Mammary epithelial cell (primary cell): ENCODE measurements at regions of chr1 and their contacts with region 1.

Region 1: GRCh38 chr1:89364954-89365567 is 1.2 kb downstream of the GBP6 start:
- DNase-seq: peak; percentile 32
- H3K4me3 ChIP-seq: peak overlapping the region; percentile 2 to 31 (median 5)
- H3K27ac ChIP-seq: peak overlapping the region; percentile 60
- H3K4me1 ChIP-seq: peaks cover 26% of the 10 kb centered on the region
- H3K27me3 ChIP-seq: no peaks in the 10 kb centered on the region
- CTCF ChIP-seq: no peak

Region 2: DNA sequence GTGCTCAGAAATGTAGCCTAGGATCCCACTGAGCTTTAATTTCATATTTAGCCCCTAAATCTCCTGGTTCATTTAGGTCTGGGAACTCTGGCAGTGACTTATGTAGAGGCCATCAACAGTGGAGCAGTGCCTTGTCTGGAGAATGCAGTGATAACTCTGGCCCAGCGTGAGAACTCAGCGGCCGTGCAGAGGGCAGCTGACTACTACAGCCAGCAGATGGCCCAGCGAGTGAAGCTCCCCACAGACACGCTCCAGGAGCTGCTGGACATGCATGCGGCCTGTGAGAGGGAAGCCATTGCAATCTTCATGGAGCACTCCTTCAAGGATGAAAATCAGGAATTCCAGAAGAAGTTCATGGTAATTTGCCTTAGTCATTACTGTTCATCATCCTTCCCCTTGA is 16.6 kb after region 1 on chr1:
- CTCF ChIA-PET with region 1: interaction called, 15 read pairs
- dilution Hi-C with region 1: no loop called
- in situ Hi-C with region 1: no loop called
- intact Hi-C with region 1: no loop called
- DNase-seq: no peak
- H3K4me3 ChIP-seq: no peak overlapping the region
- H3K27ac ChIP-seq: no peak overlapping the region
- H3K4me1 ChIP-seq: no peaks in the 10 kb centered on the region
- H3K27me3 ChIP-seq: no peaks in the 10 kb centered on the region
- CTCF ChIP-seq: no peak

Region 3: GRCh38 chr1:89499320-89499719 is 134.3 kb after region 1 on chr1:
- CTCF ChIA-PET with region 1: no interaction called
- dilution Hi-C with region 1: no loop called
- in situ Hi-C with region 1: no loop called
- intact Hi-C with region 1: no loop called
- DNase-seq: no peak
- H3K4me3 ChIP-seq: no peak overlapping the region
- H3K27ac ChIP-seq: no peak overlapping the region
- H3K4me1 ChIP-seq: no peaks in the 10 kb centered on the region
- H3K27me3 ChIP-seq: no peaks in the 10 kb centered on the region
- CTCF ChIP-seq: no peak